Mammary epithelial cell (primary cell): ENCODE measurements at regions of chr19 and their contacts with region 1.

Region 1: GRCh38 chr19:10602330-10603083 is 15.4 kb upstream of the AP1M2 start:
- DNase-seq: peak; percentile 52
- H3K4me3 ChIP-seq: peak overlapping the region; percentile 87 to 97 (median 92)
- H3K27ac ChIP-seq: no peak overlapping the region
- H3K4me1 ChIP-seq: peaks cover 19% of the 10 kb centered on the region
- H3K27me3 ChIP-seq: no peaks in the 10 kb centered on the region
- CTCF ChIP-seq: no peak

Region 2: GRCh38 chr19:10523135-10523636 is 79.3 kb before region 1 on chr19:
- CTCF ChIA-PET with region 1: no interaction called
- dilution Hi-C with region 1: no loop called
- in situ Hi-C with region 1: no loop called
- intact Hi-C with region 1: no loop called
- DNase-seq: no peak
- H3K4me3 ChIP-seq: no peak overlapping the region
- H3K27ac ChIP-seq: no peak overlapping the region
- H3K4me1 ChIP-seq: peaks cover 4% of the 10 kb centered on the region
- H3K27me3 ChIP-seq: no peaks in the 10 kb centered on the region
- CTCF ChIP-seq: no peak

Region 3: DNA sequence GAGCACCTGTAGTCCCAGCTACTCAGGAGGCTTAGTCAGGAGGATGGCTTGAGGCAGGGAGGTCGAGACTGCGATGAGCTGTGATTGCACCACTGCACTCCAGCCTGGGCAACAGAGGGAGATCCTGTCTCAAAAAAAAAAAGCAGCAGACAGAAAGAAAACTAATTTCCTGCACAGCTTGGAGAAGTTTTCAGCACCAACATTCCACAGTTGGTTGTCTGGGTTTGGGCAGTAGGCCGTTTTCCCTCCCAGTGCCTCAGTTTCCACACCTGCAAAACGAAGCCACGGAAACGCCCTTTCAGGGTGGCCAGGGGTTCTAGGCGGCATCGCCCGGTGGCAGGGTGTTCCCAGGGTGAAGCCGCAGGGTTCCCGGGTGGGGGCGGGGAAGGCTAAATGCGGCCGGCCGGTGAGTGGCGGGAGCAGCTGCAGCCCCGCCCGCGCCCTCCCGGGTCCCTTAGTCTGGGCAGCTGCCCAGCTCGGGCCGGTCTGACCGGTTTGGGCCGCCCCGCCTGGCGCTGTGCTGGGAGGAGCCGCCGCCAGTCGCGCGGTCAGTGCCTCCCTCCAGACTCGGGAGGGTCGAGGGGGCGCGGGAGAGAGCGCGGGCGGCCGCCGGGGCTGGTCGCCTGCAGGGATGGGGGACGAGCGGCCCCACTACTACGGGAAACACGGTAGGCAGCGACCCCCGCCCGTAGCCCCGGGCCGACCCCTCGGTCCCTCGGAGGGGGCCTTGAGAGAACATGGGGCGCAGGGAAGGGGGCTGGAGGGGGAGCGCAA is 22.7 kb after region 1 on chr19 and contains the start of gene SLC44A2:
- CTCF ChIA-PET with region 1: no interaction called
- dilution Hi-C with region 1: no loop called
- in situ Hi-C with region 1: no loop called
- intact Hi-C with region 1: loop called (anchors 2 kb)
- DNase-seq: peak; percentile 77
- H3K4me3 ChIP-seq: peak within 1 kb of the TSS; percentile 74 to 88 (median 77)
- H3K27ac ChIP-seq: peak within 1 kb of the TSS; percentile 40
- H3K4me1 ChIP-seq: peaks cover 20% of the 10 kb centered on the region
- H3K27me3 ChIP-seq: no peaks in the 10 kb centered on the region
- CTCF ChIP-seq: no peak
- total RNA-seq, gene SLC44A2: 64.8 to 87.9 TPM

Region 4: GRCh38 chr19:10653715-10654492 is 51.4 kb after region 1 on chr19 and contains the start of gene ILF3:
- CTCF ChIA-PET with region 1: no interaction called
- dilution Hi-C with region 1: no loop called
- in situ Hi-C with region 1: no loop called
- intact Hi-C with region 1: no loop called
- DNase-seq: peak; percentile 100
- H3K4me3 ChIP-seq: peak within 1 kb of the TSS; percentile 87 to 99 (median 98)
- H3K27ac ChIP-seq: peak within 1 kb of the TSS; percentile 97
- H3K4me1 ChIP-seq: peaks cover 8% of the 10 kb centered on the region
- H3K27me3 ChIP-seq: no peaks in the 10 kb centered on the region
- CTCF ChIP-seq: no peak
- total RNA-seq, gene ILF3: 75.5 to 252 TPM

Region 5: GRCh38 chr19:10667867-10668266 is 65.4 kb after region 1 on chr19:
- CTCF ChIA-PET with region 1: no interaction called
- dilution Hi-C with region 1: loop called (anchors 5 kb)
- in situ Hi-C with region 1: no loop called
- intact Hi-C with region 1: no loop called
- DNase-seq: no peak
- H3K4me3 ChIP-seq: no peak overlapping the region
- H3K27ac ChIP-seq: no peak overlapping the region
- H3K4me1 ChIP-seq: peaks cover 1% of the 10 kb centered on the region
- H3K27me3 ChIP-seq: no peaks in the 10 kb centered on the region
- CTCF ChIP-seq: no peak